ENCODE measurements at regions of chr15 and their contacts with region 1.

Region 1: DNA sequence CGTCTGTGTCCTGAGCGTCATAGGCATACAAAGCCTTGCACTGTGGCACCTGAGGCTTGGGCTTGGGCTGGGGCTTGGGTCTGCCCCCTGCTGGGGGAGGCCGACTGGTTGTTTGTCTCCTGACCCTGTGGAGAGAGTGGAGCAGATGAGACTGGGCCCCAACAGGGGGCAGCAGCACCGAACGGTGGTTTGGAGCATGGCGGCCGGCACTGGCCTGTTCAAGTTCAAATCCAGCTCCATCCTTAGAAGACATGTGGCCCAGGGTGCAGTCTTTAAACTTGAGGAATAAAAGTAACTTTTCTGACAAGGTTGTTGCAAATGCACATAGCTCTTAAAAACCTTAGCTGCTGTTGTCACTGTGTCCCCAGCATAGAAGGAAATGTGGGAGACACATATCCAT is 33.3 kb downstream of the CCNB2 start:
- DNase-seq: peak; percentile 15
- ATAC-seq: peak; percentile 82
- H3K4me3 ChIP-seq: no peak overlapping the region
- H3K27ac ChIP-seq: no peak overlapping the region
- H3K4me1 ChIP-seq: no peaks in the 10 kb centered on the region
- H3K27me3 ChIP-seq: no peaks in the 10 kb centered on the region
- CTCF ChIP-seq: peak; percentile 84

Region 2: GRCh38 chr15:59340325-59340724 is 202.1 kb after region 1 on chr15:
- CTCF ChIA-PET with region 1: no interaction called
- POLR2A ChIA-PET with region 1: interaction called, 10 read pairs
- in situ Hi-C with region 1: no loop called
- intact Hi-C with region 1: no loop called
- DNase-seq: no peak
- ATAC-seq: no peak
- H3K4me3 ChIP-seq: no peak overlapping the region
- H3K27ac ChIP-seq: no peak overlapping the region
- H3K4me1 ChIP-seq: peaks cover 4% of the 10 kb centered on the region
- H3K27me3 ChIP-seq: no peaks in the 10 kb centered on the region
- CTCF ChIP-seq: no peak

Measured in Panc1 (cell line).